ENCODE measurements at regions of chr2 and their contacts with region 1.

Region 1: GRCh38 chr2:97697252-97698235 is 15.8 kb upstream of the ZAP70 start:
- DNase-seq: peak; percentile 75
- ATAC-seq: peak; percentile 86
- H3K4me3 ChIP-seq: no peak overlapping the region
- H3K27ac ChIP-seq: no peak overlapping the region
- H3K4me1 ChIP-seq: peaks cover 13% of the 10 kb centered on the region; the same call in 1 of the 2 replicates
- H3K27me3 ChIP-seq: no peaks in the 10 kb centered on the region
- CTCF ChIP-seq: peak; percentile 96
- EP300 ChIP-seq: no peak
- POLR2A ChIP-seq: no peak
- RAD21 ChIP-seq: peak; percentile 97

Region 2: GRCh38 chr2:97645695-97646629 is 51.6 kb before region 1 on chr2 and contains the start of gene COX5B:
- CTCF ChIA-PET with region 1: interaction called, 4 read pairs
- POLR2A ChIA-PET with region 1: no interaction called
- in situ Hi-C with region 1: no loop called
- intact Hi-C with region 1: loop called (anchors 1 kb)
- DNase-seq: peak; percentile 98
- ATAC-seq: peak; percentile 96
- H3K4me3 ChIP-seq: peak within 1 kb of the TSS; percentile 98 to 100 (median 99)
- H3K27ac ChIP-seq: peak within 1 kb of the TSS; percentile 76
- H3K4me1 ChIP-seq: peaks cover 21% of the 10 kb centered on the region
- H3K27me3 ChIP-seq: no peaks in the 10 kb centered on the region; a peak in 1 of 5 replicates
- CTCF ChIP-seq: peak; percentile 29; the same call in 1 of the 2 replicates
- EP300 ChIP-seq: no peak; a peak in 1 of 4 replicates
- POLR2A ChIP-seq: peak; percentile 92 to 95
- RAD21 ChIP-seq: no peak; the same call in 1 of the 2 replicates
- total RNA-seq, gene COX5B: 453 and 457 TPM in 2 replicates

Region 3: DNA sequence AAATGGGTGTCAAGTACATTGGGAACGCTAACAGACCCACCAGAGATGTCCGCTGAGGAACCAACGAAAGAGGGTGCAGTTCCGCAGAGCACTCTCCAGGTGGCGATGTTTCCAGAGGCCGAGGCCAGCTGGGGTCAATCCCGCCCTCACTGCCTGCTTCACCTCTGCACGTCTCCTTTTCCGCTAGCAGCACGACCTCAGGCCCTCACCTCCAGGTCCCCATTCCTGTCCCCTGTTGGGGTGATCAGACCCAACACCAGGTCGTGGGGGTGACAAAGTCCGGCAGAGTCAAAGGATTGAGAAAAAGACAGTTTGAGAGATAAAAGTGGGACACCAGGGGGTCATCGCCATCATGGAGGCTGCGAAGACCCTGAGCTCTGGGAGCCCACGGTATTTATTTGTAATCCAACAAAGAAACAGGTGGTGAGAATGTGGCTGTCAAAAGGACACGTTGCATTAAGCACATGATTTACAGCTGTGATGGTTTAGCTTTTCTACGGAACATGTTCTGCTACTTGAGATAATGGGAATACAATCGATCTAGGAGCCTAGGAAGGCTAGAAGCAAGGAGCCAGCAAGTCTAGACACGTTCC is 43.1 kb after region 1 on chr2:
- CTCF ChIA-PET with region 1: no interaction called
- POLR2A ChIA-PET with region 1: no interaction called
- in situ Hi-C with region 1: loop called (anchors 5 kb)
- intact Hi-C with region 1: loop called (anchors 5 kb)
- DNase-seq: peak; percentile 54
- ATAC-seq: peak; percentile 71
- H3K4me3 ChIP-seq: peak overlapping the region in 1 of 3 experiments; percentile 44; a peak in 1 of 6 replicates
- H3K27ac ChIP-seq: no peak overlapping the region
- H3K4me1 ChIP-seq: peaks cover 35% of the 10 kb centered on the region
- H3K27me3 ChIP-seq: peaks cover 2 to 27% of the 10 kb centered on the region in 2 experiments; a peak in 4 of 5 replicates
- CTCF ChIP-seq: peak; percentile 95
- EP300 ChIP-seq: no peak
- POLR2A ChIP-seq: no peak
- RAD21 ChIP-seq: peak; percentile 76

Region 4: DNA sequence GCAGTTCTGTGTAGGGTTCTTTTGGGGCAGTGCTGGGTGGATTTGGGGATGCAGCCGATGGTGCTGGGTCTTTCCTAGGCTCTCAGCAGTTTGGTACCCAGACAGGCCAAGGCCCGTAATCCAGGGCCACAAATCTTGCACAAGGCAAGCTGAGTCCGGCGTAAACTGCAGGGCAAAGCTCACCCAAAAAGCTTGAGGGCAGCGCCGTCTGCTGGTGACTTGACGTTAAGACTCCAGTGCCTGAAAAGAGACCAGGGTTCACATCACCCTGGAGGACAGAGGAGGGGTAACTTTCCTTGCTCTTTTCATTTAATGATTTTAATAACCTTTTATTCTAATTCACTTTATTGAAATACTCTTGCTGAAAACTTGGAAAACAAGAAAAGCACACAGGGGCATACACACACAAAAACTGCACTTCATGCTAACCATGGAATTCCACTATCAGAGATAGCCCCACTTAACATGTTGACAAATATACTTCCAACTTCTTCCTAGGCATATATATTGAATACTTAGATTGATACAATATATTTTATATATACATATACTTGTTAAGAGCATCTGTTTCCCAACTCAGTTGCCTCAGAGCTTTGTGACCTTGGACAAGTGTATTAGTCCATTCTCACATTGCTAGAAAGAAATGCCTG is 687.6 kb after region 1 on chr2:
- CTCF ChIA-PET with region 1: interaction called, 5 read pairs
- POLR2A ChIA-PET with region 1: no interaction called
- in situ Hi-C with region 1: loop called (anchors 10 kb)
- intact Hi-C with region 1: loop called (anchors 1 kb)
- DNase-seq: peak; percentile 79
- ATAC-seq: peak; percentile 95
- H3K4me3 ChIP-seq: no peak overlapping the region
- H3K27ac ChIP-seq: no peak overlapping the region
- H3K4me1 ChIP-seq: no peaks in the 10 kb centered on the region
- H3K27me3 ChIP-seq: peaks cover under 1 to 68% of the 10 kb centered on the region in 2 experiments; a peak in 4 of 5 replicates
- CTCF ChIP-seq: peak; percentile 98
- EP300 ChIP-seq: no peak
- POLR2A ChIP-seq: no peak
- RAD21 ChIP-seq: peak; percentile 95